ENCODE measurements at regions of chr12 and their contacts with region 1.

Region 1: DNA sequence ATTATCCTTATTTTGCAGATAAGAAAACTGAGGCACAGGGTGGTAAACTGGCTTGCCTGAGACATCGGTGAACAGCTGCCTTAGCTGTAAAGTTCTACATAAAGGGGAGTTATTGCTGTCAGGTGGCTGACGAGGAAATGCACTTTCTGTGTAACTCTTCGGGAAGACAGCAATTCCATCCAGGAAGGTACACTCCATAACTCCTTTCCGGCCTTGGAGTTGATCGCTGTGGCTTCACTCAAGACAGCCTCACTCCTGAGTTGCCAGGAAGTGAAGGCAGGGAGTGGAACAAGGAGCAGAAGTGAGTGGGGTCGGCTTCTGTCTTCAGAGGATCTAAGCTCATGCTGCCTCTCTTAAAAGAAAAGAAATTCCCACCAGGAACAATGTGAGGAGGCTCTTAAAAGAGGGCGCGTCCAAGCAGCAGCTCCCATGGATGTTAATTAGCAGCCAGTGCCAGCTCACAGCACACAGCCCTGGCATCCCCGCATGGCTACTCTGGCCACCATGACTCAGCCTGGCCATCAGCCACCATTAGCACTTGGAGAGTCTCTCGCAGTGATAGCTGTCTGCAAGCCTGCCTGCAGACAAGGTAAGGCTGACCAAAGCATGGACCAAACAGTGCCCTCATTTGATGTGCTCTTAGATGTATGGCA is 60.3 kb downstream of the NUAK1 start:
- DNase-seq: no peak

Region 2: GRCh38 chr12:105922670-105923102 is 155.8 kb before region 1 on chr12:
- intact Hi-C with region 1: loop called (anchors 5 kb)
- DNase-seq: no peak

Region 3: DNA sequence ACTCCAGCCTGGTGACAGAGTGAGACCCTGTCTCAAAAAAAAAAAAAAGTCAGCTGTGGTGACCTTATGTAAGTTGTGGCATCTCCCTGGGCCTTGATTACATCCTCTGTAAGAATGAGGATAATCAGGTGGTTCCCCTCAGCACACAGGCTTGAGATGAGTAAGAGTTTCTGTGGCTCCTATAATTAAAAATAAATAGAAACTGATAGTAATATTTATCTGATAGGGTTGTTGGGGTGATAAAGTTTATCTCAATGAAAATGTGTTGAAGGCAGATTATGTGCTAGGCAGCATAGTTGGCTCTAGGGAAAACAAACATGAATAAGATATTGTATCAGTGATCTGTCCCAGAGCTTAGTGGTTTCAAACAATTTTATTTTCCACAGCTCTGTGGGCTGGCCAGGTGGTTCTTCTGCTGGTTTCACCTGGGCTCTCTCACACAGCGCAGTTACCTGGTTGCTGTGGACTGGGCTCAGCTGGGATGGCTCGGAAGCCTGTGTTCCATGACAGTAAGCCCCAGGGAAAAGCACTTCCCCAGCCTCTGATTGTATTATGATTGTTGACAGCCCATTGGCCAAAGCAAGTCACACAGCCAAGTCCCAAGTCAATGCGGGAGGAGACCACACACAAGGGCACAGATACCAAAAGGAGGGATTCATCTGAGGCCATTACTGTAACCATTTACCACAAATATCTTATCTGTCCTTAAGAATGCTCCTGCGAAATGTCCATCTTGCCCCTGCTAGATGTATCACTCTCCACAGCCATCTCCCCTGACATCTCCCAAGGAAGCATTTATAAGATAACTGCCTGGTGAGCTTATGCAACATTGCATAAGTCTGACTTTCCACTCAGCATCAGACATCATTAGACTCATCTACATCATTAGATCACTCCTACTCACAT is 91.5 kb before region 1 on chr12:
- intact Hi-C with region 1: loop called (anchors 2 kb)
- DNase-seq: no peak

Region 4: DNA sequence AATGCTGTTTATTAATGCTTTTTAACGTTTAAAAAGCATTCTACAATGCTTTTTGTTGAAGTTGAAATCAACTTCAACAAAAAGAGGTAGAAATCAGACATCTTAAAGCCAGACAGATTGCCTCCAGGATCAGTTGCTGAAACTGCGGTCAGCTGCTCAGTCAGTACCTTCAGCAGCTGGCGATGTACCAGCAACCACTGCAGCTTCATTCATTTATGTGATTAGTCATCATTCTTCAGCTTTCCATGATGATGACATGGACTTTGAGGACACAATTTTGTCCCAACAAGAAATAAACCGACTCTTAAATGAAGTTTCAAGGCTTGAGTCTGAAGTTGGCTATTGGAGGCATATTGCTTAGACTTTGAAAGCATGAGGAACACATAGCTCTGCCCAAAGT is 91.8 kb after region 1 on chr12:
- intact Hi-C with region 1: no loop called
- DNase-seq: no peak

Measured in cardiac septum (tissue), 1 donor.